Lower leg skin (tissue), 4 donors: ENCODE measurements at regions of chr12 and their contacts with region 1.

Region 1: GRCh38 chr12:56221527-56222387 is at the start of gene RNF41:
- DNase-seq: peak; percentile 98 to 100
- H3K4me3 ChIP-seq: peak within 1 kb of the TSS; percentile 83
- CTCF ChIP-seq: no peak
- POLR2A ChIP-seq: peak in 1 of 2 donors; percentile 94
- total RNA-seq, gene RNF41: 33.3 to 46.5 (median 42.1) TPM

Region 2: GRCh38 chr12:55738123-55739024 is 483.4 kb before region 1 on chr12:
- intact Hi-C with region 1: no loop called
- DNase-seq: peak; percentile 90 to 94
- H3K4me3 ChIP-seq: peak overlapping the region; percentile 19
- CTCF ChIP-seq: peak in 1 of 3 donors; percentile 86
- POLR2A ChIP-seq: no peak

Region 3: GRCh38 chr12:56169225-56169759 is 52.5 kb before region 1 on chr12:
- intact Hi-C with region 1: loop called (anchors 2 kb)
- DNase-seq: no peak
- H3K4me3 ChIP-seq: no peak overlapping the region
- CTCF ChIP-seq: no peak
- POLR2A ChIP-seq: no peak